AG04449 (cell line): ENCODE measurements at regions of chr6 and their contacts with region 1.

Region 1: DNA sequence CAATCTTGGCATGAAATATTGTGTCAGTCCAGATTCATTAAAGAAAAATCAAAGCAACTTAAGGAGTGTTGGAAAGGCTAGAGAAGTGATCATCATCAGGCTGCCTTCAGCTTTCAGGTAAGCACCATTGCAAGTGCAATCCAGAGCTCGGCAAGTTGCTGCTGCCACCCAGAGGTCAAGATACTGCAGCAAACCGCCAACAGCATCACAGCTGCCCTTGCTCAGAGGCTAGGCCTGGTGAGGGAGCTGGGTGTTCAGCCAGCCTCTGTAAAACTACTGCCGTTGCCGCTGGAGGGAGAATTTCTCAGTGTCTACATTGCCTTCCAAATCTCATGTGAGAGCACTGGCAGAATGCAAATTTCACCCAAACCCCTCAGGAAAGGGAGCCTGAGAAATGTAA is 5.8 kb upstream of the SYNE1 start:
- DNase-seq: no peak
- H3K4me3 ChIP-seq: no peak overlapping the region
- CTCF ChIP-seq: peak; percentile 73

Region 2: GRCh38 chr6:152669895-152670294 is 26.9 kb after region 1 on chr6:
- CTCF ChIA-PET with region 1: interaction called, 10 read pairs
- POLR2A ChIA-PET with region 1: no interaction called
- DNase-seq: no peak
- H3K4me3 ChIP-seq: no peak overlapping the region
- CTCF ChIP-seq: peak; percentile 38